ENCODE measurements at regions of chr14 and their contacts with region 1.

Region 1: DNA sequence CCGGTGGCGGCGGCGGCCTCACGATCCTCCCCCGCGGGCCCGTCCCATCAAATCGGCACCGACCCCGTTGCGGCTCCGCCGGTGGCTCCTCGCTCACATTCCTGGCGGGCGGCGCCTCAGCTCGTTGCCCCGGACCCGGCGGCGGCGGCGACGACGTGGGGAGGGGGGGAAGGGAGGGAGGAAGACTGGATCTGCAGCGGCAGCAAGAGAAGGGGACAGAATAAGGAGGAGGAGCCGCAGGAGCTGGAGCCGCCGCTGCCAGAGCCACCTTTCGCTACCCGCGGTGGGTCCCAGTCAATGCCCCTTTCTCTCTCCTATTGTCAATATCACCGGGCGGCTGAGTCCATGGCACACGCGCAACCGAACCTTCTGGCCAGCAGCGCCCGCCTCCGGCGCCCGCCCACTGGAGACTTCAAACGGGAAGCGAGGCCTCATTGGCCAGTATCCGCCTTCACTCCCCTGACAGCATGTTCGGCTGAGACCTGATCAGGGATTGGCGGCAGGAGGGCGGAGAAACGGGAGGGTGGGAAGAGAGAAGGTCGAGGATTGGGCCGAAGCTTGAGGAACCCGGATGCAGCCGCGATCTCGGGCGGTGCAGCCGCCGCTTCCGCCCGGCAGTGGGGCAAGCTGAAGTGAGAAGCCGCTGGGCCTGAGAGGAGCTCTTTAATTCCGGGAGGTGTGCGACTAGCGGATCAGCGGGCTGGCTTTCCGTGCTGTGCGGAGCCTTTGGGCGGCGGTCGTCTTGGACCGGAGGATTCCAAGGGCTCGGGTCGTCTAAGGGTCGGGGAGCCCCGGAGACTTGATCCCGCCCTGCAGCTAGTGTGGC is at the start of gene PPP2R5E:
- DNase-seq: peak; percentile 99
- H3K4me3 ChIP-seq: peak within 1 kb of the TSS; percentile 74 to 91 (median 90)
- H3K27ac ChIP-seq: peak within 1 kb of the TSS; percentile 74
- H3K4me1 ChIP-seq: peaks cover 16% of the 10 kb centered on the region
- H3K27me3 ChIP-seq: no peaks in the 10 kb centered on the region
- CTCF ChIP-seq: no peak
- POLR2A ChIP-seq: peak; percentile 98
- total RNA-seq, gene PPP2R5E: 51.1 and 52.5 TPM in 2 replicates

Region 2: GRCh38 chr14:63437953-63438757 is 105.1 kb before region 1 on chr14:
- CTCF ChIA-PET with region 1: interaction called, 6 read pairs
- POLR2A ChIA-PET with region 1: no interaction called
- dilution Hi-C with region 1: no loop called
- intact Hi-C with region 1: loop called (anchors 5 kb)
- DNase-seq: peak; percentile 94
- H3K4me3 ChIP-seq: no peak overlapping the region
- H3K27ac ChIP-seq: no peak overlapping the region
- H3K4me1 ChIP-seq: peaks cover 12% of the 10 kb centered on the region
- H3K27me3 ChIP-seq: no peaks in the 10 kb centered on the region
- CTCF ChIP-seq: no peak
- POLR2A ChIP-seq: no peak

Region 3: GRCh38 chr14:63614679-63615363 is 71.6 kb after region 1 on chr14:
- CTCF ChIA-PET with region 1: interaction called, 8 read pairs
- POLR2A ChIA-PET with region 1: interaction called, 3 read pairs
- dilution Hi-C with region 1: no loop called
- intact Hi-C with region 1: loop called (anchors 1 kb)
- DNase-seq: peak; percentile 98
- H3K4me3 ChIP-seq: peak overlapping the region in 1 of 3 experiments; percentile 35
- H3K27ac ChIP-seq: peak overlapping the region; percentile 90
- H3K4me1 ChIP-seq: peaks cover 30% of the 10 kb centered on the region
- H3K27me3 ChIP-seq: no peaks in the 10 kb centered on the region
- CTCF ChIP-seq: no peak
- POLR2A ChIP-seq: peak; percentile 62

Region 4: GRCh38 chr14:63727774-63728728 is 184.8 kb after region 1 on chr14 and contains the start of gene SGPP1:
- CTCF ChIA-PET with region 1: no interaction called
- POLR2A ChIA-PET with region 1: no interaction called
- dilution Hi-C with region 1: no loop called
- intact Hi-C with region 1: loop called (anchors 5 kb)
- DNase-seq: peak; percentile 71
- H3K4me3 ChIP-seq: peak within 1 kb of the TSS; percentile 28 to 80 (median 63)
- H3K27ac ChIP-seq: peak within 1 kb of the TSS; percentile 46
- H3K4me1 ChIP-seq: peaks cover 17% of the 10 kb centered on the region
- H3K27me3 ChIP-seq: no peaks in the 10 kb centered on the region
- CTCF ChIP-seq: peak; percentile 21 to 52
- POLR2A ChIP-seq: peak; percentile 79
- total RNA-seq, gene SGPP1: 7.6 and 7.9 TPM in 2 replicates

Region 5: GRCh38 chr14:64279704-64280668 is 736.8 kb after region 1 on chr14:
- CTCF ChIA-PET with region 1: no interaction called
- POLR2A ChIA-PET with region 1: no interaction called
- dilution Hi-C with region 1: no loop called
- intact Hi-C with region 1: no loop called
- DNase-seq: peak; percentile 92
- H3K4me3 ChIP-seq: no peak overlapping the region
- H3K27ac ChIP-seq: no peak overlapping the region
- H3K4me1 ChIP-seq: peaks cover 22% of the 10 kb centered on the region
- H3K27me3 ChIP-seq: no peaks in the 10 kb centered on the region
- CTCF ChIP-seq: no peak
- POLR2A ChIP-seq: peak; percentile 55